Activated T-helper 2 cell treated with anti-CD3 and anti-CD28 coated beads, Interferon-gamma antibody, Interleukin-2, Interleukin-4, amounts not matched to agents 10 μg/mL and 5 μg/mL and 100 μg/mL, durations not matched to agents 14 hours and 24 hours and 36 hours (primary cell): ENCODE measurements at regions of chr5 and their contacts with region 1.

Region 1: DNA sequence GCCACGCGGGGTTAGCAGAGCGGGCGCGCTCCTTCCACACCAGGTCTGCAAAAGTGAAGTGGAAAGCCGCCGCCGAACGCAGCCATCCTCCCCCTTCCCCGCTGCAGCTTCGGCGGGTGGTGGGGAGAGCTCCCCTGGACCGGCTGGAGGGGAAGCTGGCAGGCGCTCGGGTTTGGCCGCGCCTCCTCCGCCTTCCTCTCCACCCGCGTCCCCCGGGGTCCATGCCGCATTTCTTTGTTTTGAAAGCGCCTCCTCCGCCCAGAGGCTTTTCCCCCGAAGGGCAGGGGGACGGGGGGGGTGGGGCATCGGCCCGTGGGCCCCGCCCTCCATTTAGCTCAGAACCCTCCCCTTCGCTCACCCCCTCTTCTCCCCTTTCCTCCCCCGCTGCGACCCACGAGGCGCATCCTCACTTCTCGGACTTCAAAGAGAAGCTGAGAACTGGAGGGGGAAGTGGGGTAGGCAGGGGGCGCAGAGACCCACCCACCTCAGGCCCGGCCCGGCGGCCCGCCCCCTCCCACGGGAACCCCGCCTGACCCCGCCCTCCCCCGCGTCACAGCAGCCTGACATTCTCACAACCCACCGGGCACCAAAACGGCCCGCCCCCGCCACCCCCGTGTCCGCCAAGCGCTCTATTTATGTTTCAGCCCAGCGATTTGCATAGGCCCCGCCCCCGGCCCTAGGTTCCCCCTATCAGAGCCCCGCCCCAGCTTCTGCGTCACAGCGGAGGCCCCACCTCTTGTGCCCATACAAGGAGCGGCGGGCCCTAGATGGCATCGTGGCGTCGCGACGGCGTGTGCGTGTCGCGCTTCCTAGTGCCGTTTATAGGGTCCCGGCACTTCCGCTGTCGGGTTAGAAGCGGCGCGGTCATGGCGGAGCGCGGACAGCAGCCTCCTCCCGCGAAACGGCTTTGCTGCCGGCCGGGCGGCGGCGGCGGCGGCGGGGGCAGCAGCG is at the start of gene ZSWIM6:
- DNase-seq: peak; percentile 96
- H3K4me3 Mint-ChIP-seq: peak within 1 kb of the TSS; percentile 95
- H3K27ac Mint-ChIP-seq: peak within 1 kb of the TSS; percentile 96
- H3K4me1 Mint-ChIP-seq: peaks cover 49% of the 10 kb centered on the region
- H3K27me3 Mint-ChIP-seq: peaks cover 33% of the 10 kb centered on the region
- total RNA-seq, gene ZSWIM6: 8.9 TPM in 2 replicates

Region 2: DNA sequence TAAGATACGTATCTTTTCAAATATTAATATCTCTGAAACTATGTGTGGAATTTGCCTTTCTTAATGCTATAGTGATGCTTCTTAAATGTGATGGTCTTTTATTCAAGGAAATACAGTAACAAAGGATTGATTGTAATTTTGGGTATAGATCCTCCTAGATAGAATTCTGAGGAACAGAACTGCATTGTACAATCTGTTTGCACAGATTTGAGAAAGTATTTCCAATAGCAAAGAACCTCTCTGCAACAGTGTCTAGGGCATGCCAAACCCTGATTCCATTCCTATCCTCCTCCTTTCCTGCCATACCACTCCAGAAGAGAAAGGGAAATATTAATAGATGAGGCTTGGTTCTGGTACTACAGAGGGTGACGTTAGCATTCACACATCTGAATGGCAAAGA is 179.8 kb before region 1 on chr5:
- intact Hi-C with region 1: no loop called
- DNase-seq: no peak
- H3K4me3 Mint-ChIP-seq: no peak overlapping the region
- H3K27ac Mint-ChIP-seq: no peak overlapping the region
- H3K4me1 Mint-ChIP-seq: no peaks in the 10 kb centered on the region
- H3K27me3 Mint-ChIP-seq: no peaks in the 10 kb centered on the region

Region 3: GRCh38 chr5:61202213-61202612 is 129.5 kb before region 1 on chr5:
- intact Hi-C with region 1: loop called (anchors 1 kb)
- DNase-seq: no peak
- H3K4me3 Mint-ChIP-seq: no peak overlapping the region
- H3K27ac Mint-ChIP-seq: peak overlapping the region; percentile 12
- H3K4me1 Mint-ChIP-seq: peaks cover 9% of the 10 kb centered on the region
- H3K27me3 Mint-ChIP-seq: peaks cover 4% of the 10 kb centered on the region

Region 4: DNA sequence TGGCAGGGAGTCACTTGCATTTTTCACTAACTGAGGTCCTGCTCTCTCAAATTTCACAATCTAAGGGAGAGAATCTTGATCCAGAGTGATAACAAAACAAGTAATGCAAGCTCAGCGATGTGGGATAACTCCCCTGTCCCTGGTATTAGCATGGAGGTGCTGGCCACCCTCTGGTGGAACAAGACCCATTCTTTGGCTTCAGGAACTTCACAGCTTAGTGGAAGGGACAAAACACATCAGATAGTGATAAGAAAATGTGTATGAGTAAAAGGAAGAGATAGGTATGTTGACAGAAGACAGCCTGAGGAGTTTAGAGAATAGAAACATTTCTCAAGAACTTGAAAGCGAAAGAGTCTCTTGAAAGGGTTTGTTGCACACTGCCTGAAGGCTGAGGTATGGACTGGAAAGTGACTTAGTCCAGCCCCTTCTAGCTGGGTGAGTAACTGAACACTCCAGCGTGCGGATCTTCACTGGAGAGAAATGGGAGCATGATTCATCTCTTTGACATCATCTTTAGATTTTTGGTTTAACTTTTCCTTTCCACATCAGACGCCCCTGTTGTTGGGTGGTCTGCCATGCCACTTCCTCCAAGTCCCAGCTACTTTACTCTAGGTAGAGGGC is 25.1 kb before region 1 on chr5:
- intact Hi-C with region 1: loop called (anchors 1 kb)
- DNase-seq: peak; percentile 46
- H3K4me3 Mint-ChIP-seq: peak overlapping the region; percentile 27
- H3K27ac Mint-ChIP-seq: peak overlapping the region; percentile 95
- H3K4me1 Mint-ChIP-seq: peaks cover 38% of the 10 kb centered on the region
- H3K27me3 Mint-ChIP-seq: no peaks in the 10 kb centered on the region

Region 5: DNA sequence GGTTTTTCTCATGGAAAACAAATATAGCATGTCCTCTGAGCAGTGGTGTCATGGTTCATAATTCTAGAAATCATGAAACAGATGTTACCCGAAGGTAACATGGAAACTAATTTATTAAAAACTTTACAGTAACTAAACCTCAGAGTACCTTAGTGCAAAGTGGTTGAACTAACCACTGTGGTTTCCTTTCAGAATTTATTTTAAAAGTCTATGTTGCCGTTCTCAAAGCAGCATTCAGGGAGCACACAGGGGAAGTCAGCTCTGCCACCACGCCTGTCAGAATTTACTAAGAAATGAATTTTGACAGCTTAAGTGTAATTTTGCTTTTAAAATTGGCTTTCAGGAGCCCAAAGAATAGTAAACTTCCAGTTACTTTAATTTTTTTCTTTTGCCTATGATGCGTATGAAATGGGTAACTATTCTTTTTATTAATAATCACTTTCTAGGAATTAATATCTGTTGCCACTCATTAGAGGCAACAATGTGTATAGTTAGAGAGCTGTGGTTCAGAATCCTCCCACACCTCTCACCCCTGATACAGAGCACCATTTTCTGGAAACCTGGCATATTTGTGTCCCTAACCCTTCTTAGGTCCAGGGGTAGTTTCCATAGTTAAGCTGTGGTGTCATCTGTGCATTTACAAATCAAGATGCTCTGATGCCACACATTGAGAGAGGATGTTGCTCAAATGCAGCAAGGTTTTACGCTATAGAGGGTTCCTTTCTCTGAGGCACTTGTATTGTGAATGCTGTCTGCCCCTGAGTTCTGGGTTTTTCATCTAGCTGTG is 203.0 kb after region 1 on chr5:
- intact Hi-C with region 1: loop called (anchors 5 kb)
- DNase-seq: no peak
- H3K4me3 Mint-ChIP-seq: no peak overlapping the region
- H3K27ac Mint-ChIP-seq: peak overlapping the region; percentile 4
- H3K4me1 Mint-ChIP-seq: peaks cover 16% of the 10 kb centered on the region
- H3K27me3 Mint-ChIP-seq: no peaks in the 10 kb centered on the region